ENCODE measurements at regions of chr2 and their contacts with region 1.

Region 1: DNA sequence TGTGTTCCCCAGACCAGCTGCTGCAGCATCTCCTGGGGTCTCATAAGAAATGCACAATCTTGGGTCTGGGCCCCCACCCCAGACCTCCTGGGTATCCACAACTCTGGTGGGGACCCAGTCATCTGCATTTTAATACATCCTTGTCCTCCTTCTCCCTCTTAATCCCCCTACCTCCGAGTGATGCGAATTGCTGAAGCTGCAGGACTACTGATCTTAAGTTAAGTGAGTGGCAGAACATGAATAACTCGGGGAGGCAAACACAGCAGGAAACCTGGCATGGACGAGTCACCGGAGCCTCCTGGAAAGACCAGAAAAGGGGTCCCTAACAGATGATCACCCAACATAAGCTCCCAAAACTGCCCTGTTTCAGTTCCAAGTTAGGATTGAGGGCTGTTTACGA is 283.2 kb upstream of the MGAT5 start:
- DNase-seq: no peak
- H3K4me3 ChIP-seq: no peak overlapping the region
- H3K27ac ChIP-seq: no peak overlapping the region
- H3K4me1 ChIP-seq: no peaks in the 10 kb centered on the region
- H3K27me3 ChIP-seq: peaks cover 11% of the 10 kb centered on the region
- CTCF ChIP-seq: no peak

Region 2: DNA sequence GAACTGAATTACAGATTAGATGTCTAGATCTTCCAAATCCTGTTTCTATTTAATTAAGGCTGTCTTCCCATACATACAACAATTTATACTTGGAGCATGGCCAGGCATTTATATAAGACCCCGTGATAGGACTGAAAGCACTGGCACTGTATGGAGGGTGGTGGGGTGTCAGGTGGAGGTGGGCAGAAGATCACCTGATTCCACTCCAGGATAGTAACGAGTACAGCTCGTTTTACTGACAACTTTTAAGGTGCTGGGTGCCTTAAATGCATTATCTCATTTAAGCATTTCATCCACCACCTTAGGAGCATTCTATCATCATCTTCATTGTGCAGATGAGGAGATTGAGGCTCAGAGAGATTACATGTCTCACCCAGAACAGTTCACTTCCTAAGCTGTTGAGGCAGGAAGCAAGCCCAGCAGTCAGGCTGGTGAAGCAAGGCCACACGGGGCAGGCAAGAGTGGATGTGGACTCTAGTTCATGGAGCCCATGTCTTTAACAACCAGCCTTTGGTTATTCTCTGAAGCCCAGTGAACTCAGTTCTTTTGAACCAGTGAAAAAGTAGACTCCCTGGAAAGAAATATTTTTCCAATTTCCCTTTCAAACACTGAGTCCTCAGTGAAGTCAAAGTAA is 11.7 kb before region 1 on chr2:
- CTCF ChIA-PET with region 1: no interaction called
- POLR2A ChIA-PET with region 1: interaction called, 15 read pairs
- intact Hi-C with region 1: no loop called
- DNase-seq: no peak
- H3K4me3 ChIP-seq: no peak overlapping the region
- H3K27ac ChIP-seq: no peak overlapping the region
- H3K4me1 ChIP-seq: no peaks in the 10 kb centered on the region
- H3K27me3 ChIP-seq: peaks cover 47% of the 10 kb centered on the region
- CTCF ChIP-seq: no peak